ENCODE measurements at regions of chr3 and their contacts with region 1.

Region 1: GRCh38 chr3:5122030-5122740 is at the start of gene ARL8B:
- DNase-seq: peak; percentile 95
- ATAC-seq: peak; percentile 99
- total RNA-seq, gene ARL8B: 67.3 TPM

Region 2: GRCh38 chr3:5187156-5187919 is 65.2 kb after region 1 on chr3 and contains the start of gene EDEM1:
- intact Hi-C with region 1: loop called (anchors 1 kb)
- DNase-seq: peak; percentile 97
- ATAC-seq: peak; percentile 98
- total RNA-seq, gene EDEM1: 6.3 TPM

Region 3: GRCh38 chr3:5304789-5305683 is 182.9 kb after region 1 on chr3:
- intact Hi-C with region 1: loop called (anchors 5 kb)
- DNase-seq: no peak
- ATAC-seq: peak; percentile 68

Region 4: GRCh38 chr3:5332270-5332956 is 210.2 kb after region 1 on chr3:
- intact Hi-C with region 1: no loop called
- DNase-seq: no peak
- ATAC-seq: no peak

Measured in Right ventricle myocardium inferior (tissue), 1 donor.